ENCODE measurements at regions of chr10 and their contacts with region 1.

Region 1: GRCh38 chr10:93280699-93281366 is 201.3 kb downstream of the MYOF start:
- DNase-seq: no peak
- ATAC-seq: no peak

Region 2: GRCh38 chr10:93030409-93030808 is 250.4 kb before region 1 on chr10:
- intact Hi-C with region 1: no loop called
- DNase-seq: no peak
- ATAC-seq: no peak

Region 3: DNA sequence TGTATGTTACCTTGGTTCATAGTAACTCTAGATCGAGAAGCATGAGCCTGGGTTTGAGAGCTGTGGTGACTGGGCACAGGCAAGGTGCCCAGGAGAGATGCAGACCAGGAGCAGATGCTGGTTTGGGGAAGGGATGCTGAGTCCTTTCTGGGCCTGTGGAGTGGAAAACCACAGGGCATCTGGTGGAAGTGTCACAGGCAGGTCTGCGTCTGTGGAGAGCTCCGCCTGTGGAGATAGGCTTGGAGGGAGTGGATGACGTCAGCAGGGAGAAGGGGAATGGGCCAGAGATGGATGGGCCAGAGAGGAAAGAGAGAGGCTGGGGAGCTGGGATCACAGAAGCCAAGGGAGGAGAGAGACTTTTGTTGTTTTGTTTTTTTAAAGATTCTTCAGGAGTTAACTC is 192.4 kb before region 1 on chr10:
- intact Hi-C with region 1: loop called (anchors 5 kb)
- DNase-seq: no peak
- ATAC-seq: no peak